CD14-positive monocyte (primary cell): ENCODE measurements at regions of chr10 and their contacts with region 1.

Region 1: DNA sequence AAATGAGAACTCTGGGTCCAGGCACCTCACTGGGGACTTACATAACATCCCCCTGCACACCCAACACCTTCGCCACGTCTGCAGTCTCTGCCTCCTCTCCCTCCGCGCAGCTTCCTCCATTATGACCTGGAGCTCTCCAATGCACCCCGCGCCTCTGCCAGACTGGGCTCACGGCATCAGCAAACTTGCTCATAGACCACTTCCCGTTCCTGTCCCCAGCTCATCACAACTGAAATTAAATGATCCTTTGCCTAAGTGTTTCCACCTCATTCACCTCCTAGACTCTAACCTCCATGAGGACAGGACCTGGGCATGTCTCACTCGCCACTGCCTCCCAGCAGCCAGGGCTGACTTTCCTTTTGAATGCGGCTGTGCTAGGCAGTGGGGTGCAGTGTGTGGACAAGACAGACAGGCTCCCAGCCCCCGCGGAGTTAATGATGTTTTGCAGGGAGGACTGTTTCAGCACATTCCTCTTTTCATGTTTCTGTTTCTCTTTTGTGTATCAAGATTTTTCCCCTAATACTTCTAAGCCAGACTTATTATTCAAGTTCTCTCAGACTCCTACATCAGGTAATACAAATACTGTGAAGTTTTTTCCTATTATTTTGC is 18.8 kb downstream of the CHST15 start:
- DNase-seq: peak; percentile 79 to 81 (median 81)
- H3K4me3 ChIP-seq: peak overlapping the region in 1 of 3 experiments; percentile 2
- H3K4me3 Mint-ChIP-seq: peak overlapping the region; percentile 61 to 62
- H3K27ac ChIP-seq: peak overlapping the region; percentile 26 to 55
- H3K27ac Mint-ChIP-seq: peak overlapping the region; percentile 31 to 93 (median 84)
- H3K4me1 ChIP-seq: peaks cover 35 to 57% of the 10 kb centered on the region in 2 donors
- H3K4me1 Mint-ChIP-seq: peaks cover 51% of the 10 kb centered on the region
- H3K27me3 ChIP-seq: no peaks in the 10 kb centered on the region
- H3K27me3 Mint-ChIP-seq: peaks cover 4 to 16% (median 8%) of the 10 kb centered on the region in 3 donors
- CTCF ChIP-seq: no peak

Region 2: DNA sequence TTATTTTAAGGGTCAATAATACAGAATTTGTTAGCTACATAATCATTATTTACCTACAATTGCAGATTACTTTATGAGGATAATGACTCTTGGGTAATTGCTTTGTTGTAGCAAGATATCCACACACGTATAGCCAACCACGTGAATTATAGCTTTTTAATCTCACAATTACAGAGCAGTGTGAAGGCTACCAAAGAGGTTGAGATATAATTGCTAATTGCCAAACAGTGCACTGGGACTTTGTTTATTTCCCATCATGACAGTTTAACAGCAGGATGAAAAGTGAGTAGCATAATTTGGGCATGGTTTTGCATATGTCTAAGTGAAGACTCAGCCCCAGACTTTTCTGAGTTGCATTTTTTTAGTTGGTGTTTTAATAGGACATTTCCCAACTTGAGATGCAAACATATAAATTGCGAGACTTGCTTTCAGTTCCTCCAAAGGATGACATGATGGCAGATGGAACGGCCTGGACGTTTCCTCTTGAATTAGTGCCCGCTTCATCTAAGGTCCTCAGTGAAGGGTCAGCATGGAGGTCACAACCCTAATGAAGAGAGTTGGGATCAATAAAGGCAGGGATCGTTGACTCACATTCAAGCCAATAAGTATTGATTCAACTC is 589.2 kb before region 1 on chr10:
- intact Hi-C with region 1: no loop called
- DNase-seq: peak; percentile 41 to 66 (median 65)
- H3K4me3 ChIP-seq: peak overlapping the region in 1 of 3 experiments; percentile 44
- H3K4me3 Mint-ChIP-seq: no peak overlapping the region
- H3K27ac ChIP-seq: peak overlapping the region in 1 of 2 donors; percentile 56
- H3K27ac Mint-ChIP-seq: peak overlapping the region in 4 of 7 donors; percentile 30 to 81 (median 70)
- H3K4me1 ChIP-seq: peaks cover 35 to 57% of the 10 kb centered on the region in 2 donors
- H3K4me1 Mint-ChIP-seq: peaks cover 50% of the 10 kb centered on the region
- H3K27me3 ChIP-seq: peaks cover 0 to 2% of the 10 kb centered on the region in 2 donors
- H3K27me3 Mint-ChIP-seq: peaks cover 2 to 4% (median 2%) of the 10 kb centered on the region in 3 donors
- CTCF ChIP-seq: no peak

Region 3: DNA sequence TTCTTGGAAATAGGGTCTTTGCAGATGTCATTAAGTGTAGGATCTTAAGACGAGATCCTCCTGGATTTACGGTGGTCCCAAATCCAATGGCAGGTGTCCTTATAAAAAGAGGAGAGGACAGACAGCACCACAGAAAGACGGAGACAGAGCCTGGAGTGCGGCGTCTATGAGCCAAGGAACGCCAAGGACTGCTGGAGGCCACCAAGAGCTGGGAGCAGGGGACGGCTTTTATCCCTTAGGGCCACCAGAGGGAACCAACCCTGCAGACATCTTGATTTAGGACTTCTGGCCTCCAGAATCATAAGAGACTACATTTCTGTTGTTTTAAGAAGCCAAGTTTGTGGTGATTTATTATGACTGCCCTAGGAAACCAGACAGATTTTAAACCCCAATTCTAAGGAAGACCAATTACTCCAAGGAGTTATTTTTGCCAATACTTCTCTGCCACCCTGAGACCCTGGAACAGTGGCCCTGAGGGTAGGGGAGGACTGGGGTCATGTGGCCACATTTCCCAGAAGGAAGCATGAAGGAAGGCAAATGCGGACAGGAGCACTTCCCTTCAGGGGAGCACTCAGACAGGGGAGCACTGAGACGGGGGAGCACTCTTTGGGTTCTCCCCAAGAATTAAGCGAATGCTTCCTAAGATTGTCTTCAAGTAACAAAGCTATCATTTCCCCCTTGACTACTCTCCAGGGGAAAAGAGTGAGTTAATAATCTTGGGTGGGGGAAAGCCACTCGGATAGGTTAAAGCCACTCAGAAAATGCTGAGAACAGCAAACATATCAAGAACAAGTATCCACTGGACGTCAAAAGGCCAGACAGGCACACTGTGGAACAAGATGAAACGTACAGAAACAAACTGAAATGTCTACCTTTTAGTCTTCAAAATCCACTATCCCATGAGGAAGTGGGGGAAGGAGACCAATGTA is 48.7 kb before region 1 on chr10:
- intact Hi-C with region 1: loop called in 1 of 2 experiments (anchors 5 kb)
- DNase-seq: peak; percentile 56 to 68 (median 66)
- H3K4me3 ChIP-seq: no peak overlapping the region
- H3K4me3 Mint-ChIP-seq: peak overlapping the region in 1 of 2 donors; percentile 30
- H3K27ac ChIP-seq: no peak overlapping the region
- H3K27ac Mint-ChIP-seq: peak overlapping the region in 6 of 7 donors; percentile 8 to 81 (median 69)
- H3K4me1 ChIP-seq: peaks cover 12 to 38% of the 10 kb centered on the region in 2 donors
- H3K4me1 Mint-ChIP-seq: peaks cover 29% of the 10 kb centered on the region
- H3K27me3 ChIP-seq: peaks cover 0 to 16% of the 10 kb centered on the region in 2 donors
- H3K27me3 Mint-ChIP-seq: peaks cover 5 to 37% (median 35%) of the 10 kb centered on the region in 3 donors
- CTCF ChIP-seq: peak; percentile 69

Region 4: DNA sequence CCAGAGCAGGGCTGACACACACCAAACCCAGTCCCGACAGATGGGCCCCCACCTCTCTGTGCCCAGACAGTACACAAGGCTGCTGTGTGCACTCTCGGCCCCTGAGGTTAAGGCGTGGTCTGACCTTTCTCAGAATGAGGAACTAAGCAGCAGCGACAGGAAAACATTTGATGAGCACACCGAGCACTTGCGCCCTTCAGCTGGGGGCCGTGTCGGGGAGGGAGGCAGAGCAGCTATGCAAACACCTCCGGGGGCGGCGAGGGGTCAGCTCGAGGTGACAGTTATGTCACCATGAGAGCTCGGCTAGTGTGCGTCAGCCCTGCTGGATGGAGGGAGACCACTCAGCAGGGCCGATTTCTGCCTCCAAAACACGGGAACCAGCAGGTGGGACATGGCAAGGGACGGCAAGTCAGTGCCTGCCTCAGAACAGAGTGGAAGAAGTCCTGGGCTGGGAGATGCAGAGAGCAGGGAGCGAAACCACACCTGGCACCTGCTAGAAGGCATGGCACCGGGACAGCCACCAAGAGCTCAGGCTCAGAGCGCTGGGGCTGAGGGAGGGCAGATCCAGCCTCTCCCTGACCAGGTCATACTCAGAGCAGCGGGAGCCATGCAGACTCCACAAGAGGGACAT is 38.6 kb before region 1 on chr10:
- intact Hi-C with region 1: loop called in 1 of 2 experiments (anchors 5 kb)
- DNase-seq: peak; percentile 96 to 98 (median 96)
- H3K4me3 ChIP-seq: peak overlapping the region in 1 of 3 experiments; percentile 39
- H3K4me3 Mint-ChIP-seq: peak overlapping the region; percentile 66 to 75
- H3K27ac ChIP-seq: peak overlapping the region; percentile 63 to 88
- H3K27ac Mint-ChIP-seq: peak overlapping the region; percentile 97 to 100 (median 99)
- H3K4me1 ChIP-seq: peaks cover 83% of the 10 kb centered on the region in 2 donors
- H3K4me1 Mint-ChIP-seq: peaks cover 76% of the 10 kb centered on the region
- H3K27me3 ChIP-seq: no peaks in the 10 kb centered on the region
- H3K27me3 Mint-ChIP-seq: peaks cover 0 to 8% (median 4%) of the 10 kb centered on the region in 3 donors
- CTCF ChIP-seq: no peak

Region 5: DNA sequence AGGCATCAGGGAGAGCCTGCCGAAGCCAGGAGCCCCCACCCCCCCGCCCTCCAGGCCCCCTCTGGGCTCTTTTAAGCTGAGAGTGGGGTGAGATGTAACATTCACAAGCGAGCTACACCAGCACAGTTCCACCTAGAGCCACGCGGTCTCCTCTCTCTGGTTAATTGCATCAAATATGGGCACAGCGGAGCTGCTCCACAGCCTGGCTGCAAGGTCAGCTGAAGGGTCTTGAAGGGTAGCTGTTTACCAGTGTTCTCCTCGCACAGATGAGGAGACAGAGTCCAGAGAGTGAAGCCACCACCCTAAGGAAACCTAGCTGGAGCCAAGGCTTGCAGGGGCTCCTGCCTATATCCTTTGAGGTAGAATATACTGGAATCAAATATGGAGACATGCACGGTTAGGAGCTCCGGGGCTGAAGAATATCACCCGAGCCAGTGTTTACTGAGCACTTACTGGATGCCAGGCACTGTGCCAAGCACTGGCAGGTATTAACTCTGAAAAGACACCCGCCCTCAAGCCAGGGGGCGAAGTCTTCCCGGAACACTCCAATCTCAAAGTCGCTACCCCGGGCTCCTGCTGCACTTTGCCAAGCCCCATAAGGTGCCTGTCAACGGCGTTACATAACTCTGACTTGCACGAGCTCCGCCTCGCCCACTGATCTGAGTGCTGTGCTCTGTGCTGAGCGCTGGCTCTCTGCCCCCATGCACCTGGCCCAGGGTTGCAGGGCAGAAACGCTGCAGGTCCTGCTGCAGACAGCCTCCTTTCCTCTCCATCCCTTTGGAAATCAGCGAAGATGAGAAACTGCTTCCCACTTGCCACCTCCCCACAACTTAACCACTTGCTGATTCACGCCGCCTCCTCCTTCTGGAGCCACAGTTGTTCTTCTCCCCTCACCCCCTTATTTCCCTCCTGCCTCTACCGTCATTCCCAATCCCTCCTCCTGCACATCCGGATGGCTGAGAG is 13.3 kb after region 1 on chr10:
- intact Hi-C with region 1: loop called in 1 of 2 experiments (anchors 2 kb)
- DNase-seq: no peak
- H3K4me3 ChIP-seq: peak overlapping the region in 1 of 3 experiments; percentile 99
- H3K4me3 Mint-ChIP-seq: peak overlapping the region; percentile 50 to 98
- H3K27ac ChIP-seq: no peak overlapping the region
- H3K27ac Mint-ChIP-seq: no peak overlapping the region
- H3K4me1 ChIP-seq: peaks cover 61 to 81% of the 10 kb centered on the region in 2 donors
- H3K4me1 Mint-ChIP-seq: peaks cover 80% of the 10 kb centered on the region
- H3K27me3 ChIP-seq: peaks cover 0 to 15% of the 10 kb centered on the region in 2 donors
- H3K27me3 Mint-ChIP-seq: peaks cover 24 to 54% (median 48%) of the 10 kb centered on the region in 3 donors
- CTCF ChIP-seq: no peak

Region 6: GRCh38 chr10:124465003-124465776 is 390.6 kb after region 1 on chr10:
- intact Hi-C with region 1: no loop called
- DNase-seq: peak; percentile 9 to 21 (median 21)
- H3K4me3 ChIP-seq: no peak overlapping the region
- H3K4me3 Mint-ChIP-seq: no peak overlapping the region
- H3K27ac ChIP-seq: no peak overlapping the region
- H3K27ac Mint-ChIP-seq: peak overlapping the region in 2 of 7 donors; percentile 36 to 62
- H3K4me1 ChIP-seq: peaks cover 17 to 23% of the 10 kb centered on the region in 2 donors
- H3K4me1 Mint-ChIP-seq: peaks cover 29% of the 10 kb centered on the region
- H3K27me3 ChIP-seq: peaks cover 0 to under 1% of the 10 kb centered on the region in 2 donors
- H3K27me3 Mint-ChIP-seq: peaks cover 0 to 4% (median 0%) of the 10 kb centered on the region in 3 donors
- CTCF ChIP-seq: no peak